ENCODE measurements at regions of chr10 and their contacts with region 1.

Region 1: GRCh38 chr10:71378336-71379117 is 18.2 kb upstream of the CDH23 start:
- DNase-seq: no peak
- ATAC-seq: no peak

Region 2: DNA sequence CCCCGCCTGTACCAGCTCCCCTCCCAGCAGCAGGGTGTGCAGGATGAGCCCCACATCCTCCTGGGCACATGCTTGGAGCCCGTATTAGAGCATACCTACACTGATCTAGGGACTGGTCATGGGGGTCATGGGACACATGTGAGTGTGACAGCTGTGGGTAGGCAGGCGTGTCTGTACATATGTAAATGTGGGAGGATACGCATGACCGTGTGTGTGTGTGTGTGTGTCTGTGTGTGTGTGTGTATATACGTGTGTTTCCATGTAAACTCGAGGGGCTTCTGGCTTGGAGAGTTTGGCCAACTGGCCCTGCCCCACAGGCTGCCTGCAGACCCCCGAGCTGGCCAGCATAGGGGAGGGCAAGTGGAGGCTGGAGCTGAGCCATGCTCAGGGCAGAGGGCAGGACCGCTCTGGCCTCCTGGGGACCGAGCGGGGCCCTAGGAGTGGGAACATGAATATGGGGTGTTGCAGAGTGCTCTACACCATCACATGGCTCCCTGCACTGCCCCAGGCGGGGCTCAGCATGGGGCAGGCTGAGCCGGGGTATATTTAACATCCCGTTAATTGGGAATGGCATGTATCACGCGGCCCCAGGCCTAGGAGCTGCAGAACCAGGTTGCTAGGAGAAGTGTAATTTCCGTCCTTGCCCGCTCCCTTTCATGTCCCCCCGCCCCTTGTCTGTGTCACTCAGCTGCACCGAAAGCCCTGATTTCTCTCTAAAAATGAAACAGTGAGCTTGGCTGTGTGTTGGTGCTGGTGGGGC is 337.5 kb before region 1 on chr10:
- intact Hi-C with region 1: no loop called
- DNase-seq: no peak
- ATAC-seq: peak; percentile 58

Region 3: GRCh38 chr10:71343392-71343773 is 35.1 kb before region 1 on chr10:
- intact Hi-C with region 1: no loop called
- DNase-seq: no peak
- ATAC-seq: peak; percentile 45

Region 4: GRCh38 chr10:71700731-71701368 is 322.3 kb after region 1 on chr10:
- intact Hi-C with region 1: loop called (anchors 5 kb)
- DNase-seq: no peak
- ATAC-seq: peak; percentile 80

Measured in Right ventricle myocardium superior (tissue), 1 donor.